PC-9 (cell line): ENCODE measurements at regions of chr17 and their contacts with region 1.

Region 1: GRCh38 chr17:44533533-44534246 is 23.6 kb upstream of the FZD2 start:
- DNase-seq: peak; percentile 58 to 85
- H3K4me3 ChIP-seq: no peak overlapping the region
- H3K27ac ChIP-seq: no peak overlapping the region
- H3K4me1 ChIP-seq: peaks cover 33% of the 10 kb centered on the region
- H3K27me3 ChIP-seq: no peaks in the 10 kb centered on the region
- CTCF ChIP-seq: peak; percentile 95

Region 2: GRCh38 chr17:44522883-44523671 is 10.6 kb before region 1 on chr17:
- CTCF ChIA-PET with region 1: no interaction called
- POLR2A ChIA-PET with region 1: interaction called, 15 read pairs
- intact Hi-C with region 1: no loop called
- DNase-seq: peak in 1 of 2 experiments; percentile 62
- H3K4me3 ChIP-seq: no peak overlapping the region
- H3K27ac ChIP-seq: no peak overlapping the region
- H3K4me1 ChIP-seq: no peaks in the 10 kb centered on the region
- H3K27me3 ChIP-seq: no peaks in the 10 kb centered on the region
- CTCF ChIP-seq: peak; percentile 66

Region 3: DNA sequence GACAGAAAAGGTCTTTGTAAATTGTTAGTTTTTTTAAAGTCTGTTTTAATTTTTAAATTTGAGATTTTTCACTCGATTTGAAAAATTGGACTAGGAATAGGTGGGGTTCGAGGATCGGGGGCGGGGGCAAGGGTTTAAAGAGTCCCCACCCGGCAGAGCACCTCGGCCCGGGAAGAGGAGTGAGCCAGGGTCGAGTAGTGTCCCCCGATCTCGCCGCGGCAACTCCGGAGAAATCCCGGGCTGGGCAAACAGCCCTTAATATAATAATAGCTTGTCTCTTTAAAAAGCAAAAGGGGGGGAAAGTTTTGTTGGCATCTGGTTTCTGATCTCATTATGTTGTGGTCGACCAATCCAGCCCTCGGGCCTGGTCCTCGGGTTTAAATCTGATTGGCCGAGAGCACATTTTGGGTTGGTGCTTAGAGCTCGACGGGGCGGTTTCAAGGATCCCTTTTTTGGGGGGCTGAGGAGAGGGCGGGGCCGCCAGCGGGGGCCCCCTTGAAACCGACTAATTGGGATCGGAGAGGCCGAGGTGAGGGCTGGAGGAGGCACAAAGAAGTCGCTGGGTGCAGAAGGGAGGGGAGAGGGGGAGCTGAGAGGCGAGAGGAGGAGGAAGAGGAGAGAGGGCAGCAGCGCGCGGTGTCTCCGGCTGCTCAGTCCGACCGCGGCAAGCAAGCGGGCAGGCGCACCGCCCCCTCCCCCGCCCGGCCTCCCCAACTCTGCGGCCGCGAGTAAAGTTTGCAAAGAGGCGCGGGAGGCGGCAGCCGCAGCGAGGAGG is 23.3 kb after region 1 on chr17 and contains the start of gene FZD2:
- CTCF ChIA-PET with region 1: interaction called, 5 read pairs
- POLR2A ChIA-PET with region 1: interaction called, 4 read pairs
- intact Hi-C with region 1: loop called (anchors 1 kb)
- DNase-seq: peak; percentile 90 to 94
- H3K4me3 ChIP-seq: peak within 1 kb of the TSS; percentile 70
- H3K27ac ChIP-seq: peak within 1 kb of the TSS; percentile 69
- H3K4me1 ChIP-seq: peaks cover 40% of the 10 kb centered on the region
- H3K27me3 ChIP-seq: no peaks in the 10 kb centered on the region
- CTCF ChIP-seq: no peak
- total RNA-seq, gene FZD2: 50.5 and 61.8 TPM in 2 replicates

Region 4: GRCh38 chr17:44623070-44623725 is 89.5 kb after region 1 on chr17:
- CTCF ChIA-PET with region 1: no interaction called
- POLR2A ChIA-PET with region 1: no interaction called
- intact Hi-C with region 1: loop called (anchors 5 kb)
- DNase-seq: no peak
- H3K4me3 ChIP-seq: no peak overlapping the region
- H3K27ac ChIP-seq: no peak overlapping the region
- H3K4me1 ChIP-seq: no peaks in the 10 kb centered on the region
- H3K27me3 ChIP-seq: no peaks in the 10 kb centered on the region
- CTCF ChIP-seq: no peak; the same call in 1 of the 2 replicates

Region 5: DNA sequence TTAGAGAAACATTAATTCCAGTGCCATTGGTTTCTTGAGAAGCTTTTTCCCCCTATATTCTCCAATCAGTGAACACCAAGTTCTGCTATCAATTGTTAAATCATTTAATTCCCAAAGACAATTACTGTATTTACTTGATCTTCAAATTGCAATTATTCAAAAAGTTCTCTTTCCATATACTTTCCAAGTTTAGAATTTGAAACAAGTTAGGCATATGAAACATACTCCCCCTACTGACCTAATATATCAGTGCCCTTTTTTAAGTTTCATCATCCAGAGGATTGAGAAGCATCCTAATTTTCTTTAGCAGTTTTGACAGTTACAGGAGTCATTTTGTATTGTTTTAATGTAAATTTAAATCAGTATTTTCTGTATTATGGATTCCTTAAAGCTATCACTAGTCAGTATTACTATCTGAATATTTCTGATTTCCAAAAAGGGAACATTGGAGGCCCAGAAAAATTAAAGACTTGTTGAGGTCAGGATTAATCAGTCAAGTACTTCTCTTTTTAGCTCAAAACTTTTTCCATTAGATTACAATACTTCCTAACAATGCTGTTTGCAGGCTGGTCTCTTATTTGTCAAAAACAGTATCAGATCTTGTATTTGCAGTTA is 138.9 kb after region 1 on chr17:
- CTCF ChIA-PET with region 1: interaction called, 4 read pairs
- POLR2A ChIA-PET with region 1: no interaction called
- intact Hi-C with region 1: loop called (anchors 2 kb)
- DNase-seq: no peak
- H3K4me3 ChIP-seq: no peak overlapping the region
- H3K27ac ChIP-seq: no peak overlapping the region
- H3K4me1 ChIP-seq: no peaks in the 10 kb centered on the region
- H3K27me3 ChIP-seq: no peaks in the 10 kb centered on the region
- CTCF ChIP-seq: peak; percentile 73